Breast epithelium (tissue), 4 donors: ENCODE measurements at regions of chr3 and their contacts with region 1.

Region 1: GRCh38 chr3:150581174-150581573 is 21.9 kb upstream of the SELENOT start:
- DNase-seq: no peak
- H3K4me3 ChIP-seq: no peak overlapping the region
- H3K27ac ChIP-seq: no peak overlapping the region
- H3K4me1 ChIP-seq: no peaks in the 10 kb centered on the region
- H3K27me3 ChIP-seq: no peaks in the 10 kb centered on the region
- CTCF ChIP-seq: no peak
- POLR2A ChIP-seq: no peak

Region 2: DNA sequence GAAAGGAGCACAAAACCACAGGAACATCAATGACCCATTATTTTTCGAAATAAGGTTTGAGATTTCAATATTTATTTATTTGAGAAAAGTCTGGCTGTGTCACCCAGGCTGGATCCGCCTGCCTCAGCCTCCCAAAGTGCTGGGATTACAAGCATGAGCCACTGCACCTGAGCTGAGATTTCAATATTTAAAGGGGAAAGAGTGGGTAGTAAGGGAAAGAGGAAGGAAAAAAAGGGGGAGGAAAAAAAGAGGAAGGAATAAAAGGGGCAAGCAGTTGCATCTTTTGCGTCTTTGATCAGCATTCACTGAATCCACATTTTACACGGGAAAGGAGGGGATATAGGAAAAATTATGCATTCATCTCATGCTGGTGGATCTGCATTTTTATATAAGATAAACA is 75.1 kb after region 1 on chr3:
- intact Hi-C with region 1: loop called (anchors 2 kb)
- DNase-seq: no peak
- H3K4me3 ChIP-seq: no peak overlapping the region
- H3K27ac ChIP-seq: no peak overlapping the region
- H3K4me1 ChIP-seq: no peaks in the 10 kb centered on the region
- H3K27me3 ChIP-seq: no peaks in the 10 kb centered on the region
- CTCF ChIP-seq: no peak
- POLR2A ChIP-seq: no peak

Region 3: GRCh38 chr3:150675587-150675986 is 94.4 kb after region 1 on chr3:
- intact Hi-C with region 1: no loop called
- DNase-seq: no peak
- H3K4me3 ChIP-seq: no peak overlapping the region
- H3K27ac ChIP-seq: no peak overlapping the region
- H3K4me1 ChIP-seq: no peaks in the 10 kb centered on the region
- H3K27me3 ChIP-seq: no peaks in the 10 kb centered on the region
- CTCF ChIP-seq: no peak
- POLR2A ChIP-seq: no peak